ENCODE measurements at regions of chr18 and their contacts with region 1.

Region 1: DNA sequence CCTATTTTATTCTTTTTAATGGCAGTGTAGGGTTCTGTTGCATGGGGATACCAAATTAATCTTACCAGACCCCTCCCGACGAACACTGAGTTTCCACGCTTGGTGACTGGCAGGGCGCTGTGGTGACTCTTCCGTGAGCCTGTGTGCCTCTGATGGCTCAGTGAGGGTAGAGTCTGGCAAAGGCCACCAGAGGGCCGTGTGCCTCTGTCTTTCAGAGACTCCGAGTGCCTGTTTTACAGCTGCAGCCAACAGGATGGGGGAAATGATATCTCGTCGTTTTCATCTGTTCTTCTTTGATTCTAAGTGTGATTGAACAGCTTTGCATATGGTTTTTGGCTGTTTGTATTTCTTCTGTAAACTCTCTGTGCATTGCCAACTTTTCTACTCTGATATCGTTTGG is 99.8 kb downstream of the ZNF236 start:
- DNase-seq: peak in 8 of 9 donors; percentile 40 to 72 (median 62)
- ATAC-seq: peak; percentile 98
- H3K4me3 ChIP-seq: no peak overlapping the region
- H3K4me3 Mint-ChIP-seq: peak overlapping the region in 1 of 10 donors; percentile 50
- H3K27ac ChIP-seq: no peak overlapping the region
- H3K27ac Mint-ChIP-seq: peak overlapping the region in 7 of 9 donors; percentile 1 to 78 (median 49)
- H3K4me1 ChIP-seq: no peaks in the 10 kb centered on the region
- H3K4me1 Mint-ChIP-seq: peaks cover 14 to 21% (median 18%) of the 10 kb centered on the region in 7 donors
- H3K27me3 ChIP-seq: no peaks in the 10 kb centered on the region
- H3K27me3 Mint-ChIP-seq: no peaks in the 10 kb centered on the region

Region 2: GRCh38 chr18:77067291-77068061 is 145.4 kb after region 1 on chr18:
- CTCF ChIA-PET with region 1: no interaction called
- POLR2A ChIA-PET with region 1: no interaction called
- intact Hi-C with region 1: loop called in 1 of 2 experiments (anchors 5 kb)
- DNase-seq: peak in 1 of 9 donors; percentile 74
- ATAC-seq: peak; percentile 60
- H3K4me3 ChIP-seq: peak overlapping the region; percentile 35
- H3K4me3 Mint-ChIP-seq: peak overlapping the region; percentile 54 to 85 (median 70)
- H3K27ac ChIP-seq: peak overlapping the region; percentile 52
- H3K27ac Mint-ChIP-seq: peak overlapping the region; percentile 88 to 100 (median 97)
- H3K4me1 ChIP-seq: peaks cover 85 to 100% of the 10 kb centered on the region in 2 donors
- H3K4me1 Mint-ChIP-seq: peaks cover 70 to 100% (median 96%) of the 10 kb centered on the region in 7 donors
- H3K27me3 ChIP-seq: no peaks in the 10 kb centered on the region
- H3K27me3 Mint-ChIP-seq: no peaks in the 10 kb centered on the region

Region 3: GRCh38 chr18:77470569-77471413 is 548.7 kb after region 1 on chr18:
- CTCF ChIA-PET with region 1: no interaction called
- POLR2A ChIA-PET with region 1: no interaction called
- intact Hi-C with region 1: loop called in 1 of 2 experiments (anchors 2 kb)
- DNase-seq: no peak
- ATAC-seq: no peak
- H3K4me3 ChIP-seq: no peak overlapping the region
- H3K4me3 Mint-ChIP-seq: no peak overlapping the region
- H3K27ac ChIP-seq: no peak overlapping the region
- H3K27ac Mint-ChIP-seq: no peak overlapping the region
- H3K4me1 ChIP-seq: no peaks in the 10 kb centered on the region
- H3K4me1 Mint-ChIP-seq: no peaks in the 10 kb centered on the region
- H3K27me3 ChIP-seq: no peaks in the 10 kb centered on the region
- H3K27me3 Mint-ChIP-seq: peaks cover 13 to 36% (median 31%) of the 10 kb centered on the region in 5 donors

Region 4: DNA sequence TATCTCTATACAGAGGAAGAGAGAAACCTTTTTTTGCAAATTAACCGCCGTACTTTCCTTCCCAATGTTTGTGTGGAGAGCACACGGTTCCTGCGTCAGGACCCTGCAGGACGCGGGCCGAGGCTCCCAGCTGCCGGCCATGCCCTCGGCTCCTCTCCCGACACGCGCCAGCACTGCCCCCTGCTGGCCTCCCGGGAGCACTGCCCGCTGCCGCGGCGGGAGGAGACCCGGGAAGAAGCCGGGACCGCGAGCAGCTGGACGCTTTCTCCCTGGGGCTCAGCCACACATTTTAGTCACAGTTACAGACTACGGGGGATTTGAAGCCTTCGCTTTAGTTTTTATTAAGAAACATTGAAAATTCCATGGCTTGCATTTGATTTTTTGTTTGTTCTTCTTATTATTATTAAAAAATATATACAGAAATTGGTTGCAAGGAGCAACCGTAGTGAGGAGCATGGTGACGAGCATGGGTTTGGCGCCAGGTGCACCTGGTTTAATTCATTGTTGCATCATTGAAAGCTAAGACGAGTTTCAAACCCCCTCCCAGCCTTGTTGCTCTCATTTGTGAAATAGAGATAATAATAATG is 728.8 kb after region 1 on chr18:
- CTCF ChIA-PET with region 1: no interaction called
- POLR2A ChIA-PET with region 1: no interaction called
- intact Hi-C with region 1: loop called in 1 of 2 experiments (anchors 2 kb)
- DNase-seq: peak in 6 of 9 donors; percentile 3 to 79 (median 16)
- ATAC-seq: peak; percentile 67
- H3K4me3 ChIP-seq: no peak overlapping the region
- H3K4me3 Mint-ChIP-seq: no peak overlapping the region
- H3K27ac ChIP-seq: no peak overlapping the region
- H3K27ac Mint-ChIP-seq: no peak overlapping the region
- H3K4me1 ChIP-seq: no peaks in the 10 kb centered on the region
- H3K4me1 Mint-ChIP-seq: peaks cover 0 to 5% (median 0%) of the 10 kb centered on the region in 7 donors
- H3K27me3 ChIP-seq: no peaks in the 10 kb centered on the region
- H3K27me3 Mint-ChIP-seq: peaks cover 2 to 33% (median 21%) of the 10 kb centered on the region in 5 donors